ENCODE measurements at regions of chr3 and their contacts with region 1.

Region 1: GRCh38 chr3:69948246-69948862 is 51.2 kb upstream of the SAMMSON start:
- DNase-seq: peak; percentile 2 to 40
- H3K4me3 ChIP-seq: no peak overlapping the region
- H3K27ac ChIP-seq: no peak overlapping the region
- H3K4me1 ChIP-seq: no peaks in the 10 kb centered on the region
- H3K27me3 ChIP-seq: no peaks in the 10 kb centered on the region
- CTCF ChIP-seq: peak; percentile 72

Region 2: GRCh38 chr3:69174445-69174844 is 773.9 kb before region 1 on chr3:
- CTCF ChIA-PET with region 1: interaction called, 14 read pairs
- POLR2A ChIA-PET with region 1: no interaction called
- intact Hi-C with region 1: no loop called
- DNase-seq: no peak
- H3K4me3 ChIP-seq: no peak overlapping the region
- H3K27ac ChIP-seq: no peak overlapping the region
- H3K4me1 ChIP-seq: peaks cover 22% of the 10 kb centered on the region
- H3K27me3 ChIP-seq: no peaks in the 10 kb centered on the region
- CTCF ChIP-seq: no peak

Region 3: GRCh38 chr3:69791919-69792399 is 156.4 kb before region 1 on chr3:
- CTCF ChIA-PET with region 1: no interaction called
- POLR2A ChIA-PET with region 1: no interaction called
- intact Hi-C with region 1: loop called (anchors 5 kb)
- DNase-seq: no peak
- H3K4me3 ChIP-seq: no peak overlapping the region
- H3K27ac ChIP-seq: no peak overlapping the region
- H3K4me1 ChIP-seq: peaks cover 9% of the 10 kb centered on the region
- H3K27me3 ChIP-seq: no peaks in the 10 kb centered on the region
- CTCF ChIP-seq: peak; percentile 51

Region 4: GRCh38 chr3:69855436-69856162 is 92.8 kb before region 1 on chr3:
- CTCF ChIA-PET with region 1: no interaction called
- POLR2A ChIA-PET with region 1: no interaction called
- intact Hi-C with region 1: loop called (anchors 5 kb)
- DNase-seq: no peak
- H3K4me3 ChIP-seq: no peak overlapping the region
- H3K27ac ChIP-seq: no peak overlapping the region
- H3K4me1 ChIP-seq: peaks cover 5% of the 10 kb centered on the region; the same call in 1 of the 2 replicates
- H3K27me3 ChIP-seq: no peaks in the 10 kb centered on the region
- CTCF ChIP-seq: peak; percentile 36; the same call in 1 of the 2 replicates

Region 5: GRCh38 chr3:70264122-70264780 is 315.9 kb after region 1 on chr3:
- CTCF ChIA-PET with region 1: no interaction called
- POLR2A ChIA-PET with region 1: no interaction called
- intact Hi-C with region 1: no loop called
- DNase-seq: no peak
- H3K4me3 ChIP-seq: no peak overlapping the region
- H3K27ac ChIP-seq: no peak overlapping the region
- H3K4me1 ChIP-seq: no peaks in the 10 kb centered on the region
- H3K27me3 ChIP-seq: no peaks in the 10 kb centered on the region
- CTCF ChIP-seq: no peak

Region 6: GRCh38 chr3:70298385-70298784 is 350.0 kb after region 1 on chr3:
- CTCF ChIA-PET with region 1: no interaction called
- POLR2A ChIA-PET with region 1: no interaction called
- intact Hi-C with region 1: no loop called
- DNase-seq: no peak
- H3K4me3 ChIP-seq: no peak overlapping the region
- H3K27ac ChIP-seq: no peak overlapping the region
- H3K4me1 ChIP-seq: no peaks in the 10 kb centered on the region
- H3K27me3 ChIP-seq: no peaks in the 10 kb centered on the region
- CTCF ChIP-seq: no peak